Mucosa of descending colon (tissue), 3 donors: ENCODE measurements at regions of chr1 and their contacts with region 1.

Region 1: DNA sequence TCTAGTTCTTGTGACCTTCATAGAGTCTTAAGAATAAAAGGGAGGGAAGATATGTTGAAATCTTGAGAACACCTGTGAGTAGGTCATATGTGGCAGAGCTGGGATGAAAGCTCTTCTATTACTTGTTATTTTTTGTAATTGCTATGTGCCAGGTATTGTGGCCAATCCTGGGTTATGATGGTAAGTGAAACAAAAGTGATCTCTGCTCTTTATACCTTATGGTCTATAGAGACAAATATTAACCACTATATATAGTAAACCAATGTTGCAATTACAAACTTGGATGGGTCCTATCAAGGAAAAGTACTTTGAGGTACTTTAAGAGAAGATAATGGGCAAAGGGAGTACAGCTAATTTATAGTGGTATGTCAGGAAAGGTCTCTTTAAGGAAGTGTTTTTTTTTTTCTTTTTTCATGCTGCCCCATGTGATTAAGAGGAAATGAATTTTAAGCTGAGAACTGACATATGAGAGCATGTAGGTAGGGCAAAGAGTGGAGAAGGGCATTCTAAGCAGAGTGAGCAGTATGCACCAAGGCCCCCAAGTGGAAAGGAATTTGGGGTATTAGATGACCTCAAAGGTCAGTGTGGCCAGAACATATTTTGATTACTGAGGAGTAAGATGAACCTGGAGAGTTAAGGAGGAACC is 43.3 kb downstream of the POU2F1 start:
- DNase-seq: no peak
- ATAC-seq: peak; percentile 55
- H3K4me3 ChIP-seq: no peak overlapping the region
- H3K4me1 ChIP-seq: peaks cover 19% of the 10 kb centered on the region
- CTCF ChIP-seq: no peak

Region 2: GRCh38 chr1:167342846-167343245 is 78.9 kb after region 1 on chr1:
- intact Hi-C with region 1: loop called in 1 of 2 experiments (anchors 5 kb)
- DNase-seq: no peak
- ATAC-seq: peak; percentile 72
- H3K4me3 ChIP-seq: no peak overlapping the region
- H3K4me1 ChIP-seq: no peaks in the 10 kb centered on the region
- CTCF ChIP-seq: no peak

Region 3: GRCh38 chr1:167533851-167534300 is 269.9 kb after region 1 on chr1:
- intact Hi-C with region 1: loop called in 1 of 2 experiments (anchors 10 kb)
- DNase-seq: peak in 2 of 3 donors; percentile 76 to 77
- ATAC-seq: peak; percentile 93
- H3K4me3 ChIP-seq: no peak overlapping the region
- H3K4me1 ChIP-seq: no peaks in the 10 kb centered on the region
- CTCF ChIP-seq: peak; percentile 84